A549 (cell line): ENCODE measurements at regions of chr17 and their contacts with region 1.

Region 1: GRCh38 chr17:27494192-27495091 is 38.2 kb downstream of the KSR1 start:
- DNase-seq: peak; percentile 71 to 83
- ATAC-seq: peak; percentile 80 to 83
- H3K4me3 ChIP-seq: peak overlapping the region; percentile 24
- H3K27ac ChIP-seq: peak overlapping the region; percentile 84 to 89
- H3K4me1 ChIP-seq: peaks cover 65% of the 10 kb centered on the region
- CTCF ChIP-seq: peak; percentile 82
- EP300 ChIP-seq: no peak
- POLR2A ChIP-seq: no peak
- RAD21 ChIP-seq: peak; percentile 83 to 88

Region 2: DNA sequence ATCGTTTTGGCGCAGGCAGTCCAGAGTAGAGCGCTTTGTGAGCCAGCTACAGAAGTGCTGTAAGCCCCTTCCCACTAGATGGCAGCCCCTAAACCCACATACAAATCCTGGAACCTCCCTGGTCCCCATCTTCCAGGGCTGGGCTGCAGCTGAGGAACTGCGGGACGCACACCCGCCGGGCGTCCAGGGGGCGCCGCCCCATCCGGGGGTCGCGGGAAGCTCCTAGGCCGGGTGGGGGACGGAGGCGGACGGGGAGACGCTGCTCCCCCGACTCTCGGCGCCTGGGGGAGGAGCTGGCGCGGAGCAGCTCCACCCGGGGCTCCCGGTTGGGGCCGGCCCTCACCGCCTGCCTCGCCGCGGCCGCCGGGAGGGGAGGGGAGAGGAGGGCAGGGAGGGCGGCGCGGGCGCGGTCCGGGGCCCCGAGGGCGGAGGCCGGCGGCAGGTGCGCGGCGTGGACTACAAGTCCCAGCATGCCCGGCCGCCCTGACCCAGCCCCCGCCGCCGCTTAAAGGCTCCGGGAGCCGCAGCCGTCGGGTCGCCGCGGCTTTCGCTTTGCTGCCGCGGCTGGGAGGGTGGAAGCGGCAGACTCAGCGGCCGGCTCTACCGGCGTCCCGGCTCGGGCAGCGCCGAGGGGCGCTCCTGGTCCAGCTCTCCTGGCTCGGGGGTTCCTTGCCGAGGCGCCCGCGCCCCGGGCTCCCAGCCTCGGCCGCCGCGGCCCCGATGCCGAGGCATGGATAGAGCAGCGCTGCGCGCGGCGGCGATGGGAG is 38.3 kb before region 1 on chr17 and contains the start of gene KSR1:
- CTCF ChIA-PET with region 1: interaction called, 15 read pairs
- POLR2A ChIA-PET with region 1: no interaction called
- DNase-seq: peak; percentile 82 to 85
- ATAC-seq: peak; percentile 93 to 94
- H3K4me3 ChIP-seq: peak within 1 kb of the TSS; percentile 73
- H3K27ac ChIP-seq: peak within 1 kb of the TSS; percentile 86 to 95
- H3K4me1 ChIP-seq: peaks cover 39% of the 10 kb centered on the region
- CTCF ChIP-seq: peak; percentile 64
- EP300 ChIP-seq: no peak
- POLR2A ChIP-seq: peak; percentile 56
- RAD21 ChIP-seq: peak; percentile 67 to 74
- polyA plus RNA-seq, gene KSR1: 13.3 and 23.0 TPM in 2 replicates

Region 3: GRCh38 chr17:27481327-27481726 is 13.1 kb before region 1 on chr17:
- CTCF ChIA-PET with region 1: interaction called, 43 read pairs
- POLR2A ChIA-PET with region 1: no interaction called
- DNase-seq: no peak
- ATAC-seq: no peak
- H3K4me3 ChIP-seq: no peak overlapping the region
- H3K27ac ChIP-seq: no peak overlapping the region
- H3K4me1 ChIP-seq: peaks cover 9% of the 10 kb centered on the region
- CTCF ChIP-seq: no peak
- EP300 ChIP-seq: no peak
- POLR2A ChIP-seq: no peak
- RAD21 ChIP-seq: no peak

Region 4: DNA sequence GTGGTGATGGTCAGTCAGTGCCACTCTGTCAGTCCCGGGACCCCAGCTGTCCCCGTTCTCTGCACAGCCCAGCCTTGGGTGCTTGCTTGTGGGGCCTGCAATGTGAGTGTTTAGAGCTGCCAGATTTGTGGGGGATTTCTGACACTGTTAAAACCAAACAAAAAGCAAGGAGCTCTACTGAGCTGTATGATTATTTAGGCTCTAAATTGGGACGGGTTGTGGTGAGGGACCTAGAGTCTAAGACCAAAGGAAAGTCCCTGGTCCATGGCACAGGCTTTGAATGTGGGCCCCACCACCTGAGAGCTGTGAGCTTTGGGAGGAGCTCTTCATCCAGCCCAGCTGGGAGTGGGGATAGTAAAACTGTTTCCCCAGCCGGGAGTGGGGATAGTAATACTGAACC is 25.1 kb after region 1 on chr17:
- CTCF ChIA-PET with region 1: interaction called, 30 read pairs
- POLR2A ChIA-PET with region 1: no interaction called
- DNase-seq: no peak
- ATAC-seq: 0 out of 6 replicates have a peak, but pooled peaks of 1 of the 2 experiments have one; percentile 28
- H3K4me3 ChIP-seq: no peak overlapping the region
- H3K27ac ChIP-seq: peak overlapping the region in 1 of 2 experiments; percentile 0; a peak in 1 of 6 replicates
- H3K4me1 ChIP-seq: no peaks in the 10 kb centered on the region
- CTCF ChIP-seq: no peak
- EP300 ChIP-seq: no peak
- POLR2A ChIP-seq: no peak
- RAD21 ChIP-seq: no peak

Region 5: GRCh38 chr17:27544350-27545131 is 50.1 kb after region 1 on chr17:
- CTCF ChIA-PET with region 1: interaction called, 61 read pairs
- POLR2A ChIA-PET with region 1: no interaction called
- DNase-seq: no peak
- ATAC-seq: no peak
- H3K4me3 ChIP-seq: no peak overlapping the region
- H3K27ac ChIP-seq: peak overlapping the region; percentile 81 to 97
- H3K4me1 ChIP-seq: peaks cover 87% of the 10 kb centered on the region
- CTCF ChIP-seq: no peak
- EP300 ChIP-seq: no peak
- POLR2A ChIP-seq: no peak
- RAD21 ChIP-seq: no peak

Region 6: DNA sequence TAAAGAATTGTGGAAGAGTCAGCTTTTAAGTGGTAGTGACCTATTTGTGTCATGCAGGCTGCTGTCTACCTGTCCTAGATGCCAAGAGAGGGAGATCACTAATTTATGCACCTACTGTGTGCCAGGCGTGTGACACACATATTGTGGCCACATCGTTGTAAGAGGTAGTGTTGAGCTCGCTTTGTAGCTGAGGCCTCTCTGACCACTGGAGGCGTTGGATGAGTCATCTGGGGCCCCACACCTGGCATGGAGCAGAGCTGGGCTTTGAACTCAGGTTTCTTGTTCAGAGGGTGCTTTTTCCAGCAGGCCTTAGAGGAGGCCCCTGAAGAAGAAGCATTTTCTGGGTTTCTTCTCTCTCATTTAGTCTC is 84.3 kb after region 1 on chr17:
- CTCF ChIA-PET with region 1: interaction called, 13 read pairs
- POLR2A ChIA-PET with region 1: no interaction called
- DNase-seq: no peak
- ATAC-seq: peak; percentile 20 to 28; a peak in 3 of 6 replicates
- H3K4me3 ChIP-seq: no peak overlapping the region
- H3K27ac ChIP-seq: peak overlapping the region; percentile 64 to 87; a peak in 4 of 6 replicates
- H3K4me1 ChIP-seq: peaks cover 61% of the 10 kb centered on the region
- CTCF ChIP-seq: no peak
- EP300 ChIP-seq: no peak
- POLR2A ChIP-seq: no peak
- RAD21 ChIP-seq: no peak